ENCODE measurements at regions of chr12 and their contacts with region 1.

Region 1: DNA sequence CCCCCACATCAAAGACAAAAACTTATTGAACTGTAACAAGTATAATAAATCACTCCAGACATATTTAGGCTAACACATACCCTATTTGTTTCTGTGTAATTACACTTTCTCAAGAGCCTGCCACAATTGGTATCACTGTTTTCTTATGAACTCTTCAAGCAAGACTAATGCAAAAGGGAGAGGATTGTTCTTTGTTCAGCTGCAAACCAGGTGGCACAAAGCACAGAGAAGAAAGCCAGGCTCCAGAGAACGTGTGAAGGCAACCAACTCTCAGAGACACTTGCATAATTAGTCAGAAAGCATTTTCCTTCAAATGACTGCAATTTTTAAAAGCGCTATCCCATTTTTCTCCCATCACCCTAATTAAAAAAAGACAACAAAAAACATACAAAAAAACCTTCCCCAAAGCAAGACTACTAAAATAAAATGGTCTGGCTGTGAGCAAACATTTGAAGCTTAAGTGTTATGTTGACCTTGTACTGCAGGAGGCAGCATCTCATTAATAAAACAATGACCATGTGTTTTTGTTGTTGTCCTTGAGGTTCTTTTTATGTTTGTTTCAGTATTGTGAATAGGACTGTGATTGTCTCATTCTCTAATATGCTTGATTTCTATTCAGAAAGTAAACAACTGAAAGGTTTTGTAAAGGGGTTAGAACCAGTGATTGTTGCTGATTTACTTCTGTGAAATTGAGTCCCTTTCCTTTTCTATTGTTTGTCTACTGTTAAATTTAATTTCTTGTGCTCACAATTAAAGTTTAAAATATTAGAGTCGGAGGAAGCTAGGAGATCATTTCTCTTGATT is 452.7 kb upstream of the PDE3A start:
- DNase-seq: no peak
- ATAC-seq: peak; percentile 88
- H3K4me3 ChIP-seq: no peak overlapping the region
- H3K27ac ChIP-seq: no peak overlapping the region
- H3K4me1 ChIP-seq: no peaks in the 10 kb centered on the region
- H3K27me3 ChIP-seq: no peaks in the 10 kb centered on the region
- CTCF ChIP-seq: peak; percentile 28 to 72 (median 43); a peak in 4 of 6 replicates
- EP300 ChIP-seq: peak; percentile 30 to 57; a peak in 2 of 4 replicates
- POLR2A ChIP-seq: no peak
- RAD21 ChIP-seq: peak; percentile 70

Region 2: GRCh38 chr12:19757317-19757877 is 158.2 kb before region 1 on chr12:
- CTCF ChIA-PET with region 1: interaction called, 31 read pairs
- POLR2A ChIA-PET with region 1: no interaction called
- RAD21 ChIA-PET with region 1: interaction called, 31 read pairs
- SMC1A ChIA-PET with region 1: interaction called, 37 read pairs
- in situ Hi-C with region 1: no loop called
- intact Hi-C with region 1: loop called (anchors 5 kb)
- DNase-seq: peak; percentile 5
- ATAC-seq: peak; percentile 79
- H3K4me3 ChIP-seq: no peak overlapping the region
- H3K27ac ChIP-seq: no peak overlapping the region
- H3K4me1 ChIP-seq: no peaks in the 10 kb centered on the region
- H3K27me3 ChIP-seq: no peaks in the 10 kb centered on the region
- CTCF ChIP-seq: peak; percentile 46 to 65 (median 56)
- EP300 ChIP-seq: no peak
- POLR2A ChIP-seq: no peak
- RAD21 ChIP-seq: peak; percentile 82

Region 3: DNA sequence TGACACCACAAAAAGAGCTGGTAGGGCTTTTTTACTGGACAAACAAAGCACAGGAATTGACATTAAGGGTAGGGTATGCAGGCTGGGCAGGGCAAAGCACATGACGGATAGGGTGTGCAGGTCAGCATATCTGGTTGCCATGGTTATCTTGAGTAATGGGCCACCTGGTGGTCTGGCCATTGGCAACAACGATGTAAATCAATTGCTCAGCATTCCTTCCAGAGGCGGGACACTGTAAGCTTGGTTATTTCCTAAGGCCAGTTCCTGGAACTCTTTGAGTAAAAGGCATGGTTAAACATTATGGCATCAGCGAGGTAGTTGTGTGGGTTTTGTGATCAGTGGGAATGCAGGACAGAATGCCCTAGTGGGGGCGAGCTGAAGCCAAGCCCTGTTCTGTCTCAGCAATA is 55.8 kb after region 1 on chr12:
- CTCF ChIA-PET with region 1: interaction called, 5 read pairs
- POLR2A ChIA-PET with region 1: no interaction called
- RAD21 ChIA-PET with region 1: no interaction called
- SMC1A ChIA-PET with region 1: interaction called, 10 read pairs
- in situ Hi-C with region 1: no loop called
- intact Hi-C with region 1: loop called (anchors 5 kb)
- DNase-seq: no peak
- ATAC-seq: no peak
- H3K4me3 ChIP-seq: no peak overlapping the region
- H3K27ac ChIP-seq: no peak overlapping the region
- H3K4me1 ChIP-seq: peaks cover 9% of the 10 kb centered on the region
- H3K27me3 ChIP-seq: no peaks in the 10 kb centered on the region
- CTCF ChIP-seq: no peak
- EP300 ChIP-seq: no peak
- POLR2A ChIP-seq: no peak
- RAD21 ChIP-seq: no peak

Region 4: GRCh38 chr12:20120328-20120695 is 204.7 kb after region 1 on chr12:
- CTCF ChIA-PET with region 1: interaction called, 22 read pairs
- POLR2A ChIA-PET with region 1: no interaction called
- RAD21 ChIA-PET with region 1: interaction called, 14 read pairs
- SMC1A ChIA-PET with region 1: interaction called, 23 read pairs
- in situ Hi-C with region 1: no loop called
- intact Hi-C with region 1: loop called (anchors 5 kb)
- DNase-seq: no peak
- ATAC-seq: no peak
- H3K4me3 ChIP-seq: no peak overlapping the region
- H3K27ac ChIP-seq: no peak overlapping the region
- H3K4me1 ChIP-seq: no peaks in the 10 kb centered on the region
- H3K27me3 ChIP-seq: no peaks in the 10 kb centered on the region
- CTCF ChIP-seq: no peak
- EP300 ChIP-seq: no peak
- POLR2A ChIP-seq: no peak
- RAD21 ChIP-seq: no peak

Region 5: GRCh38 chr12:20212658-20213555 is 297.3 kb after region 1 on chr12:
- CTCF ChIA-PET with region 1: interaction called, 3 read pairs
- POLR2A ChIA-PET with region 1: no interaction called
- RAD21 ChIA-PET with region 1: interaction called, 10 read pairs
- SMC1A ChIA-PET with region 1: interaction called, 6 read pairs
- in situ Hi-C with region 1: no loop called
- intact Hi-C with region 1: no loop called
- DNase-seq: no peak
- ATAC-seq: peak; percentile 56
- H3K4me3 ChIP-seq: no peak overlapping the region
- H3K27ac ChIP-seq: no peak overlapping the region
- H3K4me1 ChIP-seq: no peaks in the 10 kb centered on the region
- H3K27me3 ChIP-seq: no peaks in the 10 kb centered on the region
- CTCF ChIP-seq: no peak
- EP300 ChIP-seq: no peak
- POLR2A ChIP-seq: no peak
- RAD21 ChIP-seq: no peak

Region 6: GRCh38 chr12:20364501-20364900 is 448.9 kb after region 1 on chr12:
- CTCF ChIA-PET with region 1: no interaction called
- POLR2A ChIA-PET with region 1: no interaction called
- RAD21 ChIA-PET with region 1: no interaction called
- SMC1A ChIA-PET with region 1: no interaction called
- in situ Hi-C with region 1: no loop called
- intact Hi-C with region 1: loop called (anchors 5 kb)
- DNase-seq: no peak
- ATAC-seq: no peak
- H3K4me3 ChIP-seq: no peak overlapping the region
- H3K27ac ChIP-seq: no peak overlapping the region
- H3K4me1 ChIP-seq: no peaks in the 10 kb centered on the region
- H3K27me3 ChIP-seq: peaks cover 0 to 1% of the 10 kb centered on the region in 2 experiments; a peak in 1 of 4 replicates
- CTCF ChIP-seq: no peak
- EP300 ChIP-seq: no peak
- POLR2A ChIP-seq: no peak
- RAD21 ChIP-seq: no peak

Region 7: GRCh38 chr12:20601668-20602280 is 686.2 kb after region 1 on chr12:
- CTCF ChIA-PET with region 1: interaction called, 4 read pairs
- POLR2A ChIA-PET with region 1: no interaction called
- RAD21 ChIA-PET with region 1: interaction called, 3 read pairs
- SMC1A ChIA-PET with region 1: no interaction called
- in situ Hi-C with region 1: no loop called
- intact Hi-C with region 1: loop called (anchors 5 kb)
- DNase-seq: no peak
- ATAC-seq: no peak
- H3K4me3 ChIP-seq: no peak overlapping the region
- H3K27ac ChIP-seq: no peak overlapping the region
- H3K4me1 ChIP-seq: no peaks in the 10 kb centered on the region
- H3K27me3 ChIP-seq: no peaks in the 10 kb centered on the region
- CTCF ChIP-seq: peak in 1 of 3 experiments; percentile 41; a peak in 1 of 6 replicates
- EP300 ChIP-seq: no peak
- POLR2A ChIP-seq: no peak
- RAD21 ChIP-seq: peak; percentile 32; the same call in 1 of the 2 replicates

Measured in GM12878 (cell line).